ENCODE measurements at regions of chr3 and their contacts with region 1.

Region 1: GRCh38 chr3:157239082-157239704 is 79.2 kb upstream of the CCNL1 start:
- DNase-seq: peak; percentile 70 to 82
- H3K4me3 ChIP-seq: no peak overlapping the region
- H3K4me3 Mint-ChIP-seq: no peak overlapping the region
- H3K27ac Mint-ChIP-seq: no peak overlapping the region
- H3K4me1 ChIP-seq: no peaks in the 10 kb centered on the region
- H3K4me1 Mint-ChIP-seq: peaks cover 10% of the 10 kb centered on the region
- H3K27me3 ChIP-seq: no peaks in the 10 kb centered on the region; the same call in 1 of the 2 replicates
- H3K27me3 Mint-ChIP-seq: peaks cover 10% of the 10 kb centered on the region
- CTCF ChIP-seq: peak; percentile 86 to 95

Region 2: DNA sequence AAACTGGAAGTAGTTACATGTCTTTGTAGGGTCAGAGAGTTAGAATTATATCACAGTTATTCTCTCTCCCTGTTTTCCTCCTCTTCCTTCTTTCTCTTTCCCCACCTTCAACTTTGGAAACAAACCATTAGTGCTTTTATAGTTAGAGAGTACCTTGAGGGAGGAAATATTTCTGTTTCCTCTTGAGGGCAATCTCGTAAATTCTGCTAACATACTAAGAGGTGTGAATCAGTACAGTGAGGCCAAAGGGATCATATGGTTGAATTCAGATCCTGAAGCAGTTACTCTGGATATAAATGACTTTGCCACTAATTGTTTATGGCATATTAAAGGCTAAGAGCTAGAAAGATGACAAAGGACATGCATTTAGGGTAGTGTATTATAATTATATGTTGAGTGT is 19.0 kb before region 1 on chr3:
- CTCF ChIA-PET with region 1: no interaction called
- POLR2A ChIA-PET with region 1: no interaction called
- intact Hi-C with region 1: loop called (anchors 2 kb)
- DNase-seq: no peak
- H3K4me3 ChIP-seq: no peak overlapping the region
- H3K4me3 Mint-ChIP-seq: no peak overlapping the region
- H3K27ac Mint-ChIP-seq: no peak overlapping the region
- H3K4me1 ChIP-seq: no peaks in the 10 kb centered on the region
- H3K4me1 Mint-ChIP-seq: no peaks in the 10 kb centered on the region
- H3K27me3 ChIP-seq: no peaks in the 10 kb centered on the region
- H3K27me3 Mint-ChIP-seq: no peaks in the 10 kb centered on the region
- CTCF ChIP-seq: no peak